Calu3 (cell line): ENCODE measurements at regions of chr6 and their contacts with region 1.

Region 1: GRCh38 chr6:168828811-168829210 is 387.8 kb downstream of the SMOC2 start:
- DNase-seq: no peak
- H3K4me3 Mint-ChIP-seq: no peak overlapping the region
- H3K27ac Mint-ChIP-seq: peak overlapping the region; percentile 54
- H3K4me1 Mint-ChIP-seq: peaks cover 9% of the 10 kb centered on the region
- H3K27me3 Mint-ChIP-seq: no peaks in the 10 kb centered on the region
- CTCF ChIP-seq: no peak

Region 2: DNA sequence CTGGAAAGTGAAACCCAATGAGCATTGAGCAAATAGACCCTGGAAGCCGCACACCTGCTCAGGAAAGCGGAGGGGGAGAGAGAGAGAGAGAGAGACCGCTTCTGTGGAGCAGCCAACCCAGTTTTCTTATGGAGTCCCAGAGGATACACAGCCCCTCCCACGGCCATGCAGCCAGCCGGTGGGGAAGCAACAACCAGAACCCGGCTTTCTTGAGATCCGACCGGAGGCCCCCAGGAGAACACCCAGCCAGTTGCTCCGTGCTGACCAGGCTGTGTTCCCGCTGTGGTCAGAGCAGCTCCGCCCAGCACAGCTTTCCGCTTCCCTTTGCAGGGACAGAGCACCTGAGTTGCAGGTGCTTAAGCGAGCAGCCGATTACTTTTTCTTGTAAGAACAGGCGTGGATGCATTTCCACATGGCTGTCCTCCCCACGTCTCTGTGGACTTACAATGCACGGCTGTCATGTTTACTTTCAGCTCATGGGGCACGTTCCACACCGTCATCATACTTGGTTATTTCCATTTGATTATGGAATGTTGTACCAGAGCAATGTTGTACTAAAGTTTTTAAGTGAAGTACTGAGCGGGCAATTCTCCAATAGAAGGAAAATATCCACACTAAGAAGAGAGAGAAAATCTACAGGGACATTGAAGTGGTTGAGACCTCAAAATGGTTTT is 43.0 kb after region 1 on chr6:
- CTCF ChIA-PET with region 1: no interaction called
- intact Hi-C with region 1: loop called (anchors 1 kb)
- DNase-seq: peak; percentile 28
- H3K4me3 Mint-ChIP-seq: peak overlapping the region; percentile 28
- H3K27ac Mint-ChIP-seq: no peak overlapping the region
- H3K4me1 Mint-ChIP-seq: peaks cover 13% of the 10 kb centered on the region
- H3K27me3 Mint-ChIP-seq: no peaks in the 10 kb centered on the region
- CTCF ChIP-seq: no peak